Cardiac septum (tissue), 1 donor: ENCODE measurements at regions of chr7 and their contacts with region 1.

Region 1: GRCh38 chr7:33895025-33895804 is 10.1 kb upstream of the BMPER start:
- DNase-seq: peak; percentile 91

Region 2: GRCh38 chr7:33757562-33758165 is 137.6 kb before region 1 on chr7:
- intact Hi-C with region 1: loop called (anchors 5 kb)
- DNase-seq: no peak

Region 3: GRCh38 chr7:33807779-33808482 is 87.3 kb before region 1 on chr7:
- intact Hi-C with region 1: no loop called
- DNase-seq: no peak

Region 4: GRCh38 chr7:33916357-33917081 is 21.3 kb after region 1 on chr7:
- intact Hi-C with region 1: no loop called
- DNase-seq: no peak